Left cardiac atrium (tissue), 4 donors: ENCODE measurements at regions of chr22 and their contacts with region 1.

Region 1: GRCh38 chr22:50276143-50276542 is 6.0 kb upstream of the MAPK11 start:
- DNase-seq: peak; percentile 73
- ATAC-seq: peak; percentile 79 to 84

Region 2: DNA sequence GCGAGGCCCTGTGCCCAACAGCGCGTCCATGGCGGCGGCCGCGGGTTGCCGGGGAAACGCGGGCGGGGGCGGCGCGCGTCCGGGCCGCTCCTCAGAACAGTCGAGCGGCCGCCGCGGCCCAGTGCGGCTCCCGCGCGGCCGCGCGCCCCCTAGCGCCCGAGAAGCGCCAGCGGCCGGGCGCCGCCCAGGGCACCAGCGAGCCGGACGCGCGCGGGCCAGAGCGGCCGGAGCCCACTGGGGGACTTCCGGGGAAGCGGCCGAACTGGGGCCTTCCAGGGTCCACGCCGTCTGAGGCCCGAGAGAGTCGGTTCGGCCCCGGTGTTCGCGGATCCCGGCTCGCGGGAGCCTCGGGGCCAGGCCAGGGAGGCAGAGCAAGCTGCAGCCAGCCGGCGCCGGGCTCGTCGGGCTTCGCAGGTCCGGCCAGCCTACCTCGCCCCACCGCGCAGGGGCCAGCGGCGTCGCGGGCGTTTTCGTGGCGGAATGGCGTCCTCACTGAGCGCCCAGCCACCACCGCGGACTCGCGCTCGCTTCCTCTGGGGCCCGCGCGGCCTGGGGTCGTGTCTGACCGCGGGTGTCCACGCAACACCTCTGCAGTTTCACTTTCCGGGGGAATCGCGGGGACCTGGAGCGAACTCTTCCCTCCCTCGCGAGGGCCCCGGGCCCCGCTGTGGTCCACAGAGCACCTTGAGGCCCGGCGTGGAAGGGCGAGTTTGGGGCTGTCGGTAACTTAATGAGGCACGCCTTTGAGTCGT is 51.0 kb after region 1 on chr22 and contains the start of gene DENND6B:
- intact Hi-C with region 1: loop called (anchors 2 to 5 kb)
- DNase-seq: peak; percentile 87
- ATAC-seq: peak; percentile 95 to 97
- total RNA-seq, gene DENND6B: 2.4 TPM

Region 3: GRCh38 chr22:50341977-50342650 is 66.0 kb after region 1 on chr22:
- intact Hi-C with region 1: loop called in 1 of 2 experiments (anchors 5 kb)
- DNase-seq: peak; percentile 91
- ATAC-seq: peak; percentile 87 to 89

Region 4: DNA sequence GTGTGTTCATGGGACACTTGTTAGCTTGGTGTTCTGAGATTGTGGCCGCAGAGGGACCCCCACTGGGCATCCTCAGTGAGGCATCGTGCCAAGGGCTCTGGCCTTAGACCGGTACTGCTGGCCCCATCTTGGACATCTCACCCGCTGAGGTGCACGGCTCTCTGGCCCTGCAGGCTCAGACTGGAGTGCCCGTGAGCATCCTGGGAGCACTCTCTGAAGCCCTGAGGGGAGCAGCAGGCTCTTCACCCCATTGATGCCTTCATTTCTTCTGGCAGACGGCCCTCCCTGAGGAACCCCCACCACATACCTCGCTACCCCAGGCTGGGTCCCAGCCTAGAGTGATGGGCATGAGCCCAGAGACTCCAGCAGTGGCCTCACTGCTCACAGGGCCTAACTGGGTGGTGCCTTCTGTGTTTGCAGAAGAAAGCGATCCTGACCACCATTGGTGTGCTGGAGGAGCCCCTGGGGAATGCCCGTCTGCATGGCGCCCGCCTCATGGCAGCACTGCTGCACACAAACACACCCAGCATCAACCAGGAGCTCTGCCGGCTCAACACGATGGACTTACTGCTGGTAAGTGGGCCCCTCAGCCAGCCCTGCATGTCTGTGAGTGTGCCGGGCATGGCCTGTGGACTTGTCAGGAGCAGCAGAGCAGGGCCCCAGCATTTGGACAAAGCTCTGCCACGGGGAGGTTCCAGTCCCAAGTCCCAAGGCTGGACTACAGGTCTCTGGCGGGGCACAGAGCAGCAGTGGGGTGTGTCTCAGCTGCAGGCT is 147.1 kb after region 1 on chr22:
- intact Hi-C with region 1: no loop called
- DNase-seq: no peak
- ATAC-seq: no peak